ENCODE measurements at regions of chr15 and their contacts with region 1.

Region 1: DNA sequence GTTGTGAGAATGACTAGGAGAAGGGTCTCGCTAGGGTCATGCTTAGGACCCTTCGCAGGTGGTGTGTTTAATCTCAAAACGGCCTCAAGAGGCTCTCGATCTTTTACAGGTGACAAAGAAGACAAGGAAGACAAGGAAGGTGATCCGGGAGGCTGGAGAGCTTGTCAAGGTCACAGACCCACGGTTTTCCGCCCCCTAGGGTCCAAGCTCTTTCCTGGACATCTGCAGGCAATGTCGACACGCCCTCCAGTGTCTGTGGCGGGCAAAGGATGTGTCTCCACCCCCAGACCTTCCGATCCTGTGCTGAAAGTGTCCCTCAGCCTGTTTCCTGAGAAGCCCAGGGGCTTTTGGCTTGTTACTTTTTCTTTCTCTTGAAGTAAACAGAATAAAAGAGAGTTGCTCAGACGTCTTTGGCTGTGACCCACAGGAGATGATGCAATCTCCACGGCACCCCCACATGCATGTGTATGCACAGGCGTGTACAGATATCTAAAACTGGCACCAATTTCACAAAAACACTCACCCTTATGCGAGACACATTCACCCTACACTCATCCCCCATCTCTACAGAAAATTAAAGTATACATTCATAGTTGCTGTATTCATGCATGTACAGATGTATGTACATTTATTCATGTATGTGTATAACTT is 108.8 kb downstream of the KLF13 start:
- DNase-seq: peak; percentile 84 to 95 (median 86)
- H3K4me3 ChIP-seq: peak overlapping the region; percentile 25 to 74
- H3K4me3 Mint-ChIP-seq: peak overlapping the region; percentile 82 to 92 (median 87)
- H3K27ac ChIP-seq: peak overlapping the region; percentile 86
- H3K27ac Mint-ChIP-seq: peak overlapping the region; percentile 93 to 99 (median 98)
- H3K4me1 ChIP-seq: peaks cover 74% of the 10 kb centered on the region
- H3K4me1 Mint-ChIP-seq: peaks cover 58 to 87% (median 69%) of the 10 kb centered on the region in 4 donors
- H3K27me3 ChIP-seq: no peaks in the 10 kb centered on the region
- H3K27me3 Mint-ChIP-seq: no peaks in the 10 kb centered on the region

Region 2: DNA sequence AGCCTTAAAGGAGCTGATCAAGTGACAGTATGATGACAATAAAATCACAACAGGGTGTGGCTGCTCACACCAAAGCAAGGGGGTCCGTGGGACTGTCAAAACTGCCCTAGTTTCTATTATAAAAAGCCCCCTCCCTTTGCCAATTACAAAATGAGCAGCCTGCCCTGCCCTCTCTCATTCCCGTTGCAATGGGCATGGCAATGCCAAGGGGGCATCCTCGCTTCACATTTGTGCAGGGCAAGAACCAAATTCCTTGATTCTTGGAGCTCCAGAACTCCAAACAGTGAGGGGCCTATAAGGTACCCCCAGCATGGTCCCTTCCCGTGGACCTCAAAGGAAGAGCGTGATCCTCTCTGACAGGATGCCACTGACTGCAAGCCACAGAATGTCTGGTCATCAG is 229.0 kb before region 1 on chr15:
- CTCF ChIA-PET with region 1: interaction called, 34 read pairs
- POLR2A ChIA-PET with region 1: interaction called, 12 read pairs
- intact Hi-C with region 1: no loop called
- DNase-seq: no peak
- H3K4me3 ChIP-seq: no peak overlapping the region
- H3K4me3 Mint-ChIP-seq: no peak overlapping the region
- H3K27ac ChIP-seq: no peak overlapping the region
- H3K27ac Mint-ChIP-seq: no peak overlapping the region
- H3K4me1 ChIP-seq: peaks cover 36% of the 10 kb centered on the region
- H3K4me1 Mint-ChIP-seq: peaks cover 14 to 34% (median 22%) of the 10 kb centered on the region in 4 donors
- H3K27me3 ChIP-seq: no peaks in the 10 kb centered on the region
- H3K27me3 Mint-ChIP-seq: no peaks in the 10 kb centered on the region

Region 3: GRCh38 chr15:31265871-31266711 is 169.3 kb before region 1 on chr15:
- CTCF ChIA-PET with region 1: interaction called, 11 read pairs
- POLR2A ChIA-PET with region 1: interaction called, 55 read pairs
- intact Hi-C with region 1: loop called (anchors 1 kb)
- DNase-seq: peak; percentile 76 to 84 (median 80)
- H3K4me3 ChIP-seq: peak overlapping the region in 1 of 2 donors; percentile 20
- H3K4me3 Mint-ChIP-seq: peak overlapping the region; percentile 1 to 86 (median 78)
- H3K27ac ChIP-seq: peak overlapping the region; percentile 70
- H3K27ac Mint-ChIP-seq: peak overlapping the region; percentile 70 to 99 (median 96)
- H3K4me1 ChIP-seq: peaks cover 75% of the 10 kb centered on the region
- H3K4me1 Mint-ChIP-seq: peaks cover 62 to 83% (median 74%) of the 10 kb centered on the region in 4 donors
- H3K27me3 ChIP-seq: no peaks in the 10 kb centered on the region
- H3K27me3 Mint-ChIP-seq: no peaks in the 10 kb centered on the region

Region 4: DNA sequence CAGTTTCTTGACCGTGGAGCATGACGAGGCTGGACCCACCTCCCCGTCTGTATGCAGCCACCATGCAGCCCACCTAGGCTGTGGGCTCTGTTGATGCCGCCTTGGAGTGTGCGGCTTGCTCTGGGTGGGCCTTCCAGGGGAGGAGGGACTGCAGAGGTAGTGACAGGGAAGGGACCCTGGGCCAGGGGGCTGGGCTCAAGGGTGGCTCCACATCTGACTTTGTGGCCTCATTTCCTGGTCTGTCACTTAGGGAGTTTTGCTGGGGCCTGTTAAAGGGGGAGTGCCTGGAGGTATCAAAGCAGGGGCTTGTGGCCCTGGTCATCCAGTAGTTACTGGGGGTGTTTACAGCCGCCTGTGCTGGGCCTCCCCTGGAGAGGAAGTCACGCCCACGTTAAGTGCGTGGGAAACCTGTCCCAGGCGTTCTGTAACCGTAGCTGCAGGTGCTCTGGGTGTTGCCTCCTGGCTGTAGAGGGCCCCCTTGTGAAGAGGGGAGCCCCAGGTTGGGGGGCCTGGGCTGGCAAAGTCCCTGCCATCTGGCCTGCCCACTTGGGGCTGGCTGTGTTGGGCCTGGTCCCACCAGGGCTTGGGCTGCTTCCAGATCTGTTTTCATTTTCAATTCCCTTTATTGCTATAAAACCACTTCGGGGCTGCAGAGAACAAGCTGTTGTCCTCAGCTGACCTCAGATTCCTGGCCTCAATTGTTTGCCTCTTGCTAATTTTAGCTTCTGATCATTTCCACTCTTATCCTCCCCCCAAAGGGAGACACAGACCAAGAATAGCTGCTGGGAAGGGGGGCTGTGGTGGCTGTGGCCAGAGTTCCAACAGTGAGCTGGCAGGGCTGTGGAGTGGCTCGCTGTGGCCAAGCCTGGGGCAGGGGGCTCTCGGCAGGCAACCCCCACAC is 82.2 kb before region 1 on chr15:
- CTCF ChIA-PET with region 1: interaction called, 44 read pairs
- POLR2A ChIA-PET with region 1: interaction called, 316 read pairs
- intact Hi-C with region 1: no loop called
- DNase-seq: peak in 4 of 5 donors; percentile 42 to 72 (median 52)
- H3K4me3 ChIP-seq: peak overlapping the region; percentile 15 to 31
- H3K4me3 Mint-ChIP-seq: peak overlapping the region; percentile 76 to 92 (median 85)
- H3K27ac ChIP-seq: peak overlapping the region; percentile 74
- H3K27ac Mint-ChIP-seq: peak overlapping the region; percentile 91 to 99 (median 95)
- H3K4me1 ChIP-seq: peaks cover 100% of the 10 kb centered on the region
- H3K4me1 Mint-ChIP-seq: peaks cover 71 to 100% (median 91%) of the 10 kb centered on the region in 4 donors
- H3K27me3 ChIP-seq: no peaks in the 10 kb centered on the region
- H3K27me3 Mint-ChIP-seq: no peaks in the 10 kb centered on the region

Region 5: DNA sequence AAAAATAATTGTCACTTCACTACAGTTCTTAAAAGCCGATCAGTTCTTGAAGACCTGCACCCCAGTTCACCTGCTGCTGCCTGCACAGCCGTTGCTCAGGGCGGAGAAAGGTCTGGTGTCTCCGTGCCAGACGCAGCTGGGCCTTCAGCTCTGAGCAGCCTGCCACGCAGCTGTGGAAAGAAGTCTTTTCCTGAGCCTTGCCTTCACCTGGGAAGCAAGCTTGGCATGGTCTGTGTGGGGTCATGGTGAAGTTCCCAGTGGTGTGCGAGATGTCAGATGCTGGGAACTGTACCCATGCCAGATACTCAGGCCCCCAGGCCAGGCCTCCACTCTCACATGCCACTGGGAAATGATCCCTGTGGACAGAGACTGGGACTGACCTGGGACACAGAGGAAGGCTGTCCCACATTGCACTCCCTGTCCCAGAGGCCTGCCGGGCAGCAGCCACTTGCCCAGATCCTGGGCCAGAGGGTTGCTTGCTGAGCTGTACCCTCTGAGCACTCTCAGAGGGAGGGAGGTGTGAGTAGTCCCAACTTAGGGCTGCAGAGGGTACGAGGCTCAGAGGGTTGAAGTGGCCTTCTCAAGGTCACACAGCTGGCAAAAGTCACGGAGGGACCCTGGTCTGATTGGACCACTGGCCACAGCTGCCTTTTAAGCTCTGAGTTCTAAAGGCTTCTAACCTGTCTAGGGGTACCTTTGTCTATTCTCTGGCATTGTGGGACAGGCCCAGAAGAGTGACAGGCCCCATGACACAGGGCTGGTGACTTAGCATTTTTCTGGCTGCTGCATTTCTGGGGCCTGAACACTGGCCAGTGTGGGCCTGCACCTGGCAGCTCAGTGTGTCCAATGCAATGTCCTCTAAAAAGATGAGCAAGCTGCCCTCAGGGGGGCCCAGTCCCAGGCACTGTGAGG is 53.3 kb before region 1 on chr15:
- CTCF ChIA-PET with region 1: interaction called, 10 read pairs
- POLR2A ChIA-PET with region 1: interaction called, 169 read pairs
- intact Hi-C with region 1: no loop called
- DNase-seq: no peak
- H3K4me3 ChIP-seq: no peak overlapping the region
- H3K4me3 Mint-ChIP-seq: no peak overlapping the region
- H3K27ac ChIP-seq: no peak overlapping the region
- H3K27ac Mint-ChIP-seq: peak overlapping the region; percentile 54 to 82 (median 78)
- H3K4me1 ChIP-seq: peaks cover 38% of the 10 kb centered on the region
- H3K4me1 Mint-ChIP-seq: peaks cover 33 to 63% (median 45%) of the 10 kb centered on the region in 4 donors
- H3K27me3 ChIP-seq: no peaks in the 10 kb centered on the region
- H3K27me3 Mint-ChIP-seq: no peaks in the 10 kb centered on the region

Region 6: GRCh38 chr15:31405200-31405920 is 30.0 kb before region 1 on chr15:
- CTCF ChIA-PET with region 1: no interaction called
- POLR2A ChIA-PET with region 1: interaction called, 16 read pairs
- intact Hi-C with region 1: no loop called
- DNase-seq: no peak
- H3K4me3 ChIP-seq: no peak overlapping the region
- H3K4me3 Mint-ChIP-seq: peak overlapping the region in 4 of 8 donors; percentile 37 to 55 (median 51)
- H3K27ac ChIP-seq: no peak overlapping the region
- H3K27ac Mint-ChIP-seq: peak overlapping the region in 6 of 7 donors; percentile 1 to 84 (median 48)
- H3K4me1 ChIP-seq: peaks cover 5% of the 10 kb centered on the region
- H3K4me1 Mint-ChIP-seq: peaks cover 10 to 17% (median 13%) of the 10 kb centered on the region in 4 donors
- H3K27me3 ChIP-seq: no peaks in the 10 kb centered on the region
- H3K27me3 Mint-ChIP-seq: peaks cover 0 to 7% of the 10 kb centered on the region in 2 donors

Region 7: DNA sequence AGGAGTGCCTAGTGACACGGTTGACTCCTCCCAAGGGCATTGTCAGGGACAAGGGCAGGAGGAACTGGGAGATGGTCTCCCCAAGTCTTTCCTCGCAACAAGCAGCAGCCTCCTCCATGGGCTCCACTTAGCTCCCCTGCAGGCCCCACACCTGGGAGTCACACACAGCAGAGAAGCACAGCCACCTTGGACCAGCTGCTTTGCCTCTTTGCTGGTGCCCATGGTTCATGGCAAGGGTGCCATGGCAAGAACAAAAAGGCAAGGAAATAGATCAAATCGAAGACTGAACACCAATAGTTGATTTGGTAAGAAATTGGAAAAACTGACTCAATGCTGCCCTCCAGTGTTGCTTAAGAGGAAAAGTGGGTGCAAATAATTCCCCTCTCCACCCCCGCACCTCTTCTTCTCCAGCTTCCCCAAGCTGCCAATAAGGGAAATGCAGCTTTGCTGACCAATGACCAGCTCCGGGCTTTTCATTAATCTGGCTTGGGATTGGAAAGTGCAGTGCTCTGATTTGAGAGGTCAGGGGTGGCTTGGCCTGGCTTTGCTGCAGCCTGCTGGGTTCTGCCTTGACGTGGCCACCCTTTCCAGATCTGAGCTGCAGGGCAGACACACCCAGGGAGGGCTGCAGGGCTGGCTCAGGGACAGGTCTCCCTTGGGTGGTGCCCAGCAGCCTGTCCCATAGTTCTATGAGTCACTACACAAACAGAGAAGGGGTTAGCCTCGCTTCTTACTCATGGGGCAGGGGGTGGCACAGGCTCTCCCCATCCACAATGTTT is 53.2 kb after region 1 on chr15:
- CTCF ChIA-PET with region 1: interaction called, 174 read pairs
- POLR2A ChIA-PET with region 1: interaction called, 128 read pairs
- intact Hi-C with region 1: loop called (anchors 1 kb)
- DNase-seq: peak in 4 of 5 donors; percentile 64 to 69 (median 66)
- H3K4me3 ChIP-seq: no peak overlapping the region
- H3K4me3 Mint-ChIP-seq: peak overlapping the region in 1 of 8 donors; percentile 30
- H3K27ac ChIP-seq: no peak overlapping the region
- H3K27ac Mint-ChIP-seq: peak overlapping the region in 5 of 7 donors; percentile 17 to 77 (median 72)
- H3K4me1 ChIP-seq: peaks cover 37% of the 10 kb centered on the region
- H3K4me1 Mint-ChIP-seq: peaks cover 14 to 51% (median 24%) of the 10 kb centered on the region in 4 donors
- H3K27me3 ChIP-seq: no peaks in the 10 kb centered on the region
- H3K27me3 Mint-ChIP-seq: no peaks in the 10 kb centered on the region